Pancreas (tissue), 10 donors: ENCODE measurements at regions of chr17 and their contacts with region 1.

Region 1: DNA sequence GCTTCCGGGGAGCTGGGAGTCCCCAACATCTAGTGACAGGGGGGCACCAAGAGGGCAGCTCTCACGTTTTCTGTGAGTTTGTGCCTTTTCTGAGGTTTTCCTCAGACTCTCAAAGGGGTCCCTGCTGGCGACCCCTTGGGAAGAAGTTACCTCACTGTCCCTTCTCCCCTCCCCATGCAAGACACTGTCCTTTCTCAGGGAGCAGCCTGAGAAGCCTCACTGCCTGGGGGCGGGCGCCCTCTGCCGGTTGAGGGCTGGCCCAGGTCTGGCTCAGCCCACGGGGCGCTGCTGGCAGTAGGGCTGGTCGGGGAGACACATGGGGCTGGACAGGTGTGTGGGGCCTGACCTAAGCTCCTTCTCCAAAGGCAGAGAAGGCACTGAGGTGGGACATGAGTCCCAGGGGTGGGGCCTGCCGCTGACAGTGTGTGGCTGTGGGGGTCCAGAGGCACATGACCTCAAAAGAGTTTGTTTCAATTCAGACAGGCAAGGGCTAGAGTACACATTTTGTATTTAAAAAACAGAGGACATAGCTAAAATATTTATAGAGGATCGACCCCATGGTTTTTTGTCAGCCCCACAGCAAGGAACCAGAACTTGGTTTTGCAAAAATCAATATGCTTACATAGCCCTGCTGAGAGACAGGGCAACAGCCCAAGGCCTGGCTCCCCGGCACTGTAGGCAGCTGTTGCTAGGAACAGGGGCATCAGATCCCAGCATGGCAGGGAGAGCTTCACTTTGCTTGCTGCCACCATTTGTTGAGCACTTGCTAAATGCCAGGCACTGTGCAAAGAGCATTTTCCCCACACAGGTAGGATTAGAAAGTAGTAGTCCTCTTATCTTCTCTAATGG is 18.5 kb upstream of the ALDH3A1 start:
- DNase-seq: peak; percentile 46 to 95 (median 80)
- ATAC-seq: peak; percentile 86 to 98 (median 94)
- H3K4me3 ChIP-seq: no peak overlapping the region
- H3K27ac ChIP-seq: no peak overlapping the region
- H3K4me1 ChIP-seq: peaks cover 0 to 5% (median 0%) of the 10 kb centered on the region in 3 donors
- H3K27me3 ChIP-seq: no peaks in the 10 kb centered on the region
- CTCF ChIP-seq: peak; percentile 80 to 93 (median 92)

Region 2: GRCh38 chr17:19362277-19363113 is 404.2 kb before region 1 on chr17 and contains the start of gene B9D1:
- intact Hi-C with region 1: loop called in 1 of 3 experiments (anchors 10 kb)
- DNase-seq: peak; percentile 91 to 99 (median 98)
- ATAC-seq: peak; percentile 95 to 98 (median 97)
- H3K4me3 ChIP-seq: peak within 1 kb of the TSS; percentile 51 to 93 (median 80)
- H3K27ac ChIP-seq: peak within 1 kb of the TSS; percentile 81 to 88 (median 86)
- H3K4me1 ChIP-seq: peaks cover 0 to 5% (median 0%) of the 10 kb centered on the region in 3 donors
- H3K27me3 ChIP-seq: no peaks in the 10 kb centered on the region
- CTCF ChIP-seq: peak; percentile 92 to 98 (median 96)
- total RNA-seq, gene B9D1: 6.6 to 13.2 (median 10.6) TPM

Region 3: DNA sequence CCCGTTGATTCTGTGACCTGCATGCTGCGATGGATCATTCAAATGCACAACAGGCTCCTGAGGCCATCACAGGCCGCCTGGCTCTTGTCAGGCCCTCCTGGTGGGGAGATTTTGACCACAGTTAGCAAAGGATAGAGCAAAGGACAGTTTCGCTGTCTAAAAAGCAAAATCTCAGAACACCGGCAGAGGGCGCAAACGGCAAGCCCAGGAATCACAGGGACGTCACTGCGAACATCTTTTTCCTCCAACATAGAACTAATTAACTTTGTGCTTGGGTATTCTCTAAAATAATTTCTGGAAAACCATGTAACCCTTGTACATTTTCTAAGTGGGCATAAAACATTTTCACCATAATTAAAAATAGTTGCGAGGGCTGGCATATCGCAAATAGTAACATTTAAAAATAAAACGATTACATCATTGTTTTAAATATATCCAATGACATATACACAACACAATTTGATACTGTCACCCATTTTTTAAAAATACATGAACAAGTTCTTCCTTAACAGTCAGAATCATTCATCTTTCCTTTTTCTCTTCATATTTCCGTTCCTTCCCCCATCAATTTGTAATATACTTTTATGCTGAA is 252.7 kb before region 1 on chr17:
- intact Hi-C with region 1: loop called in 2 of 3 experiments (anchors 5 kb)
- DNase-seq: peak in 5 of 6 donors; percentile 30 to 76 (median 55)
- ATAC-seq: peak; percentile 82 to 95 (median 92)
- H3K4me3 ChIP-seq: no peak overlapping the region
- H3K27ac ChIP-seq: no peak overlapping the region
- H3K4me1 ChIP-seq: peaks cover 0 to 4% (median 0%) of the 10 kb centered on the region in 3 donors
- H3K27me3 ChIP-seq: no peaks in the 10 kb centered on the region
- CTCF ChIP-seq: peak; percentile 55 to 86 (median 76)

Region 4: GRCh38 chr17:19520641-19521040 is 246.0 kb before region 1 on chr17:
- intact Hi-C with region 1: loop called in 1 of 3 experiments (anchors 10 kb)
- DNase-seq: no peak
- ATAC-seq: no peak
- H3K4me3 ChIP-seq: no peak overlapping the region
- H3K27ac ChIP-seq: no peak overlapping the region
- H3K4me1 ChIP-seq: no peaks in the 10 kb centered on the region
- H3K27me3 ChIP-seq: no peaks in the 10 kb centered on the region
- CTCF ChIP-seq: no peak